ENCODE measurements at regions of chr2 and their contacts with region 1.

Region 1: GRCh38 chr2:136238286-136239078 is 120.5 kb upstream of the CXCR4 start:
- DNase-seq: peak; percentile 65
- CTCF ChIP-seq: no peak

Region 2: GRCh38 chr2:136217996-136218395 is 20.5 kb before region 1 on chr2:
- CTCF ChIA-PET with region 1: interaction called, 12 read pairs
- POLR2A ChIA-PET with region 1: no interaction called
- DNase-seq: no peak
- CTCF ChIP-seq: no peak

Region 3: DNA sequence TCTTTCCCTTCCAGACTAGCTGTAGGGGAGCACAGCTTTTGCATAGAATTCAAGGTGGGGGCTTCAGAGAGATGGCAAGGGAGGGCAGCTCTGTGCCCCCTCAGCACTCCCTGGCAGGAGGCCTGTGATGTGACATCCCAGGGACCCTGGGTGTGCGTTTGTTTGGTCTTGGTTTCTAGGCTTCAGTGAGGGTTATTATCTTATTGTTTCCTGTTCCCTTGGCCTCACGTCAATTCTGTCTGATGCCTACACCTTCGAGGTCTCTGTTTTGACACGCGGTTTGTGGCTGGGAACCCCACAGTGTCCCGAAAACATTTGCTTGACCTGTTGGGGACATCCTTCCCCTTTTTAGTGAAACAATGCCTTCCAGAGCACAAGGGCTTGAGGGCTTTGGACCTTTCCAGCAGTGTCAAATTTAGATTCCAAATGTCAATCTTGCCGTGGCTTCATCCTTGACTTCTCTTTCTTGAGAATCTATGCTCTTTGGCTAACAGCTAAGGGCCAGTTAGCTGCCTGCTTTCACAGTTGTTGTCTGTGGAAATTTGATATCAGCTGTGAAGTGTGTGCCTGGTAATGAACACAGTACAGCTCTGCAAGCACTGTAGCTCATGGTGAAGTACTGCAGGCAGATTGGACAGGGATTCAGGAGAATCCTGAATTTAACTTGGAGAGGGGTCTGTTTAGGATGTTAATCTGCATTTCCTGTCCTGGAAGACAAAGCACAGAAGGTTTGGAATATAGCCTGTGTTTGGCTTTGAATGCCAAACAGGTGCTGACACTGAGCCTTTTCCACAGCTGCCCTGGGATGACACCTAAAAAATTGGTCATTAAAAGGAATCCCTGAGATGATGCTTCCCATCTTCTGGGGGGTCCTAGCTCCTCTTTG is 12.3 kb before region 1 on chr2:
- CTCF ChIA-PET with region 1: interaction called, 10 read pairs
- POLR2A ChIA-PET with region 1: no interaction called
- DNase-seq: no peak
- CTCF ChIP-seq: no peak